MCF 10A (cell line): ENCODE measurements at regions of chr4 and their contacts with region 1.

Region 1: GRCh38 chr4:121380776-121381462 is at the start of gene QRFPR:
- DNase-seq: peak; percentile 88
- H3K4me3 Mint-ChIP-seq: peak within 1 kb of the TSS; percentile 81
- H3K27ac Mint-ChIP-seq: peak within 1 kb of the TSS; percentile 40
- H3K4me1 Mint-ChIP-seq: peaks cover 21% of the 10 kb centered on the region
- H3K27me3 Mint-ChIP-seq: no peaks in the 10 kb centered on the region
- CTCF ChIP-seq: peak; percentile 6
- total RNA-seq, gene QRFPR: 6.5 and 8.4 TPM in 2 replicates

Region 2: DNA sequence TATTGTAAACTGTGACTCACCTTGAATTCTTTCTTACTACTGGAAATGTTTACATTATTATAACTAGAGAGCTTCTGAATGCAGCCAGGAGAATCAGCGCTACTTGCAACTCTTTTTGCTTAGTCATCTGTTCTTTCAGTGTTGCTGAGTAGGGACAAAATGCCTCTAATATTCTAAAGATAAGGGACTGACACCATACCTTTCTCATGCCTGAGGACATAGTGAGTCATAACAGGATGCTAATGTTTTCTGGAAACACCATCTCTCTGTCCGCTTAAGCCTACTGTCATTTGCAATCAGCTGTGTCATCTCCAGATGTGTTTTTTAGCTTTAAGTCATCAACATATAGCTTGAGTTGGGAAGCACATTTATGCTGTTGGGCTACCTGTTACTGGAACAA is 108.4 kb before region 1 on chr4:
- CTCF ChIA-PET with region 1: no interaction called
- POLR2A ChIA-PET with region 1: interaction called, 10 read pairs
- intact Hi-C with region 1: no loop called
- DNase-seq: peak; percentile 84
- H3K4me3 Mint-ChIP-seq: no peak overlapping the region
- H3K27ac Mint-ChIP-seq: peak overlapping the region; percentile 14
- H3K4me1 Mint-ChIP-seq: peaks cover 17% of the 10 kb centered on the region
- H3K27me3 Mint-ChIP-seq: no peaks in the 10 kb centered on the region
- CTCF ChIP-seq: no peak

Region 3: GRCh38 chr4:121411151-121411744 is 30.3 kb after region 1 on chr4:
- CTCF ChIA-PET with region 1: interaction called, 11 read pairs
- POLR2A ChIA-PET with region 1: interaction called, 3 read pairs
- intact Hi-C with region 1: no loop called
- DNase-seq: no peak
- H3K4me3 Mint-ChIP-seq: no peak overlapping the region
- H3K27ac Mint-ChIP-seq: no peak overlapping the region
- H3K4me1 Mint-ChIP-seq: no peaks in the 10 kb centered on the region
- H3K27me3 Mint-ChIP-seq: no peaks in the 10 kb centered on the region
- CTCF ChIP-seq: no peak

Region 4: GRCh38 chr4:121421594-121421993 is 40.7 kb after region 1 on chr4:
- CTCF ChIA-PET with region 1: interaction called, 23 read pairs
- POLR2A ChIA-PET with region 1: interaction called, 7 read pairs
- intact Hi-C with region 1: loop called (anchors 2 kb)
- DNase-seq: peak; percentile 59
- H3K4me3 Mint-ChIP-seq: no peak overlapping the region
- H3K27ac Mint-ChIP-seq: peak overlapping the region; percentile 8
- H3K4me1 Mint-ChIP-seq: peaks cover 7% of the 10 kb centered on the region
- H3K27me3 Mint-ChIP-seq: no peaks in the 10 kb centered on the region
- CTCF ChIP-seq: peak; percentile 67